ENCODE measurements at regions of chr12 and their contacts with region 1.

Region 1: DNA sequence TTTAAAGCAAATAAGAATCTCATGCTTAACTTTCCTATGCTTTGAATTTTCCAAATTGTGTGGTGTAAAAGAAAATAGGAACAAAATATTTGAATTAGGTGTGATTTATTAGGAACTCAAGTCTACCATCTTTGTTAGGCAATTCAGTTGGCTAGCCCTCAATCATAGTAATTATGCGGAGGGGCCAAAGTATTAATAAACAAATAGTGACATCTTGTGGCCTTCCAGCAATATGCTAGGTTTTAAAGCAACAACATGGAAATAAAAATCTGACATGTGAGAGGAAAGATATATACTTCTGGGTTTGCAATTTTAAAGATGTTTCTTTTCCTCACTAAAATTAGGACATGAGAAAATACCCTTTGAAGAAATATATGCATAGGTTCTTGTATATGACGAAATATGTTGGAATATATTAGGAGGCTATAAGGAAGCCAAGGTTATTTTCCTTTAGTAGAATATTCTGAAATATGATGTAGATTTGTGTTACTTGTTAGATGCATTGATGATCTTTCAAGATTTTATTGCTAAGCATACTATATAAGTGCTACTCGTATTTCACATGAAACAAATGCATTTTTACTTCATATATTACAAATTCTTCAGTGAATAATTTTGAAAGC is 200.4 kb downstream of the PTPRO start:
- DNase-seq: no peak
- ATAC-seq: peak; percentile 49 to 58
- H3K4me3 ChIP-seq: no peak overlapping the region
- H3K27ac ChIP-seq: no peak overlapping the region
- H3K4me1 ChIP-seq: no peaks in the 10 kb centered on the region
- H3K27me3 ChIP-seq: no peaks in the 10 kb centered on the region
- CTCF ChIP-seq: peak; percentile 52

Region 2: GRCh38 chr12:15276088-15276698 is 246.5 kb before region 1 on chr12:
- intact Hi-C with region 1: loop called (anchors 10 kb)
- DNase-seq: no peak
- ATAC-seq: peak; percentile 40 to 56
- H3K4me3 ChIP-seq: no peak overlapping the region
- H3K27ac ChIP-seq: no peak overlapping the region
- H3K4me1 ChIP-seq: peaks cover 37% of the 10 kb centered on the region
- H3K27me3 ChIP-seq: no peaks in the 10 kb centered on the region
- CTCF ChIP-seq: peak; percentile 69

Measured in lower lobe of right lung (tissue), 2 donors.